Left ventricle myocardium superior (tissue), 1 donor: ENCODE measurements at regions of chr4 and their contacts with region 1.

Region 1: GRCh38 chr4:155787113-155787710 is 28.4 kb downstream of the GUCY1B1 start:
- DNase-seq: no peak
- ATAC-seq: peak; percentile 90

Region 2: DNA sequence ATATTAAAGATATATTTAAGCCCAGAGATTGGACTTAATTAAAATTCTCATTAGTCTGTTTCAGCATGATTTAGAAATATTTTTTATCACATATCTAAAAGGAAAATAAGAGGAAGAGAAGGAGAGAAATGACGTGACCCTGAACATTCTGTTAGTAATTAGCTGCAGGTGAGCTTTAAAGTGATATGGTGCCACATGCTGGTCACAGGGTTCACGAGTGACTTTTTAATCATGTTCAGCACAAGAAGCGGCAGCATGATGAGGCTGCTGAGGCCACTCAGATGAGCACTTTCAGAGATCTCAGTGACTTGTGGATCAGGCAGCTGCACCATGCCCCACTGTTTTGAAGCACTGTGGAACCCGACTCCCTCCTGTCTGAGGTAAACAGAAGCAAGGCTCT is 616.6 kb before region 1 on chr4:
- intact Hi-C with region 1: no loop called
- DNase-seq: no peak
- ATAC-seq: no peak

Region 3: DNA sequence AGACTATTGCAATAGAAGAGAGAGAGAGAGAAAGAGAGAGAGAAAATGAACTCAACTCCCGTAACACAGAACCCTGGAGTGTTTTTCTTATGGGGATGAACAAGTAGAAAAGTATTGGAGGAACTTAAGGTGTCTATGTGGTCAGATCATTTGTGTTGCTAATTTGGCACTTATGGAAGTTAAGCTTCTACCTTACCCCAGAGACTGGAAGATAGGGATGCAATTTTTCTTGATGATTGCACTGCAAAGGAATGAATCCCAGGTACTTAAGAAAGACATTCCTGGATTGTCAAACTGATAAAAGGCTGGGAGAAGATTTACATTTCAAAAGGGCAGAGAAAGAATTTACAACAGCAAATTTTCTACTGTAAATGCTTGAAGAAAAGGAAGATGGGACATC is 467.7 kb before region 1 on chr4:
- intact Hi-C with region 1: no loop called
- DNase-seq: no peak
- ATAC-seq: no peak

Region 4: GRCh38 chr4:155403886-155404285 is 383.3 kb before region 1 on chr4:
- intact Hi-C with region 1: loop called (anchors 10 kb)
- DNase-seq: no peak
- ATAC-seq: peak; percentile 57

Region 5: DNA sequence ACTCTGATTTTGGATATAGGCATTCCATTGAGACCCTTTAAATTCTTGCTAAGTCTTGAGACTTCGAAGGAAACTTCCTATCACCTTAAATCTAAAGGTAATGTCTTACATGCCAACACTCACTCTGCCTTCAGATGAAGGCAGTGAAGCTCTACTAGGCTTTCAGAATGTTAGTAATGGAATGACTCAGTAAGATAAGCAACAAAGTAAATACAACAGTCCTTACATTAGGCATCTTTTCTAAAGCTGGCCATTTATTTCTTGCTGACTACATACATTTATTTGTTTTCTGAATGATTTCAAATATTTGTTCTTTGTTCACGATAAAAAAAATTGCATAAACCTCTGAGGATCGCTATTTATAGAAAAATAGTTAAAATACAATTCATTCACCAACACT is 35.4 kb after region 1 on chr4:
- intact Hi-C with region 1: no loop called
- DNase-seq: no peak
- ATAC-seq: no peak

Region 6: DNA sequence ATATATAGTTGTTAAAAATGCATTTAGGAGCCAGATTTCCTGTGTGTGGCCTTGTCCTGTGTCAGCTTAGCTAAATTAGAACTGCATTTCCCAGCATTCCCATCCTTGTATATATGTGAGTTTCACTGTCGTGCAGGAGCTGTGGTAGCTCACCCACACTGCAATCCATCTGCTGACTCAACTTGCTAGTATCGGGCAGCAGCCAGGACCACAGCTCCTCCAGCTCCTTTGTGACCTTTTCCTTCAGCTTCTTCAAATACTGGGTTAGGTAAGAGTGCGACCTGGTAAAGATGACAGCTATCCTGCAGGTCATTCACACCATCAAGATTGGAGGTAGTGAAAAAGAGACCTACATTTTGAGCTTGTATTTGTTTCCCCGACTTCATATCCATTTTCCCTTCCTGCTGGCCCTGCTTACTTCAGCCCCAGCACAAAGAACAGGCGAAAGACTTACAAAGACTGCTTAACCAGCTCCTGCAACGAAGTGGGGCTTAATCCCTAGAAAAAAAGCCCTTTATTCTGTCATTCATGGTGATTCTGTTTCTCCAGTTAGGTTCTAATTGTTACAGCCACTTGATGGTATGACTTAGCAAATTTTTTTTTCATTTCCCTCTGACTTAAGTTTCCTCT is 67.5 kb after region 1 on chr4:
- intact Hi-C with region 1: no loop called
- DNase-seq: no peak
- ATAC-seq: no peak